ENCODE measurements at regions of chr1 and their contacts with region 1.

Region 1: GRCh38 chr1:66924756-66925557 is at the starts of genes DNAI4 and MIER1:
- DNase-seq: peak; percentile 96
- ATAC-seq: peak; percentile 96
- H3K4me3 ChIP-seq: peak within 1 kb of the TSS; percentile 97 to 99
- H3K27ac ChIP-seq: peak within 1 kb of the TSS; percentile 98
- H3K4me1 ChIP-seq: peaks cover 38% of the 10 kb centered on the region
- H3K27me3 ChIP-seq: no peaks in the 10 kb centered on the region
- CTCF ChIP-seq: no peak
- total RNA-seq, gene DNAI4: 7.2 TPM
- total RNA-seq, gene MIER1: 33.7 TPM

Region 2: DNA sequence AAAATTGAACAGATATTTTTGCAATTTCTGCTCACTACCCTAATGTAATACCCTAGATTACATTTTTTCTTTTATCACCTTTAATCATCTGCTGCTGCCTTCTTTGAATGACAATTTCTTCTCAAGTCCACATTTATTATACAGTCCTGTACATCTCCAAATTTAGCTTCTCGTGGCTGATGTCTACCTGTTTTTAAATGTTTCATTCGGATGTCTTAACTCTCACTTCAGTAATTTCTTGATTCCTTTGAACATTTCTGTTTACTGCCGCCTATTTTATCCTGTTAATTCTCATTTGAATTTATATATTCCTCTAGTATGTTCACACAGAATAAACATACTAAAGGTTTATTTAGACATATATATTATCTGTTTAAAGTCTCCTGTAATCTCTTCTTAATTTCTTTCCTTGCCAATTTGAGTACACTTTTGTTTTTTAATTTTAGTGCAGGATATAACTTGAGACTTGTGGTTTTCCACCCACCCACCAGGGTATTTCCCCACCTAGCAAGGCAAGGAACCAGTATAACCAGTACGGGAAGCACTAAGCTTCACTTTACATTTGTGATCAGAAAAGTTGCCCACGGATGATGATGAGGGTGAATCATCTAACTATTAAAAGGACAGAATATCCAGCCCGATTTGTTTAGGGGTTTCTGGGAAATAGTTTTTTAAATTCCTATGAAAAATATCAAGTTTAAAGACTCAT is 136.6 kb before region 1 on chr1:
- CTCF ChIA-PET with region 1: no interaction called
- POLR2A ChIA-PET with region 1: interaction called, 21 read pairs
- in situ Hi-C with region 1: no loop called
- intact Hi-C with region 1: no loop called
- DNase-seq: no peak
- ATAC-seq: no peak
- H3K4me3 ChIP-seq: no peak overlapping the region
- H3K27ac ChIP-seq: no peak overlapping the region
- H3K4me1 ChIP-seq: no peaks in the 10 kb centered on the region
- H3K27me3 ChIP-seq: peaks cover 5% of the 10 kb centered on the region
- CTCF ChIP-seq: no peak